ENCODE measurements at regions of chr5 and their contacts with region 1.

Region 1: DNA sequence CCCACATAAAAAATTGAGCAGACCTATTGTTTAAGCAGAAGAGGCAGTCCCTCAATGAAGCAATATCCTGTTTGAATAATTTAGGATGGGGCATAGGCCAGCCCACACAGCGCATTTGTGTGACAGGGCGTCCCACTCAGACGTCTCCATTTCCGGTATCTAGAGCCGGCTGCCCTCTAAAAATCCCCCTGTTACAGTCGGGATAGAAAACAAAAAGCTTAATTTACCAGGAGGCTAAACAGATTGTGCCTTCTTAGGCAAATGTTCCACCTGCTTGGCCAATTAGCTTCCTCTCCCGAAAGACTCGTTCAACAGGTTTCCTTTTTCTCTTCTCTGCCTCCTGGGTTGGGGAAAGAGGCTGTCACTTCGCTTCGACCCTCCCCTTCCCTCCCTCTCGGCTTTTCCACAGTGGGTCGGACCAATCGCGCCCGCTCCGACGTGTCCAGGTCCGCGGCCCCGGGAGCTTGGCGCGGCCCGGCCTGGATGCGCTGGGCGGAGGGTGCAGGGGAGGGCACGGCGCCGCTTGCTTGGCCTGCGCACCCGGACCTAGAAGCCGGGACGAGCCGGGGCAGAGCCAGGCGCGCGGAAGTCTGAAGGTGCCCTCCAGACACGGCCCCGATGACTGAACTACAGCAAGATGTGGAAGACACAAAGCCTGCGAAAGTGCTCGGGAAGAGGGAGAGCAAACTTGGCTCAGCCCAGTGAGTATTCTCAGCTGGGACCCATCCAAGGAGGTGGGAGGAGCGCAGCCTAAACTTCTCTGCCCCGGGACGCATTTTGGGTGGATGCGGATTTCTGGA is at the start of gene GRAMD2B:
- DNase-seq: peak; percentile 54
- ATAC-seq: peak; percentile 89
- H3K4me3 ChIP-seq: peak within 1 kb of the TSS; percentile 78
- H3K27ac ChIP-seq: peak within 1 kb of the TSS; percentile 78
- H3K4me1 ChIP-seq: no peaks in the 10 kb centered on the region; the same call in 1 of the 2 replicates
- H3K27me3 ChIP-seq: no peaks in the 10 kb centered on the region
- CTCF ChIP-seq: no peak
- EP300 ChIP-seq: no peak
- POLR2A ChIP-seq: peak; percentile 76
- RAD21 ChIP-seq: no peak
- polyA plus RNA-seq, gene GRAMD2B: 1.9 to 2.7 TPM

Region 2: DNA sequence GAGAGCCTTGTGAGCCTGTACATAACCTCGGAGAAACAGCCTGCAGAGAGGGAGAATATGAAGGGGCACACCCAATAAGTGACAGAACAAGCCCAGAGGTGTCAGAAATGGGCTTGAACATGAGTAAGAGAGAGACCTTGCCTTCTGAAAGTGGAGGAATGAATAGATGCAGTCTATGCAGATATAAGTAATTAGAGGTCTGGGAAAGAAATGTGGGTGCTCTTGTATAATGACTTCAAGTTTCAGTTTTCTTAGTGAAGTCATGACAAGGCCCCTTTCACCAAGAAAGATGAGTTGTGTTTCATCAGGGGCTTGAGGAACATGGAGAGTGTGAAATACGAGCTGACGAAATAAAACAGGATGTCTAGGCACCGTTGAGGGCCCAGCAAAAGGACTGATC is 15.1 kb after region 1 on chr5:
- CTCF ChIA-PET with region 1: interaction called, 13 read pairs
- POLR2A ChIA-PET with region 1: no interaction called
- RAD21 ChIA-PET with region 1: interaction called, 3 read pairs
- SMC1A ChIA-PET with region 1: interaction called, 5 read pairs
- in situ Hi-C with region 1: no loop called
- intact Hi-C with region 1: loop called (anchors 2 kb)
- DNase-seq: no peak
- ATAC-seq: peak; percentile 94
- H3K4me3 ChIP-seq: no peak overlapping the region
- H3K27ac ChIP-seq: peak overlapping the region; percentile 27; the same call in 1 of the 2 replicates
- H3K4me1 ChIP-seq: peaks cover 16% of the 10 kb centered on the region
- H3K27me3 ChIP-seq: no peaks in the 10 kb centered on the region
- CTCF ChIP-seq: no peak
- EP300 ChIP-seq: peak; percentile 17 to 25; a peak in 1 of 4 replicates
- POLR2A ChIP-seq: no peak
- RAD21 ChIP-seq: no peak